Posterior cingulate gyrus (tissue), 11 donors: ENCODE measurements at regions of chr20 and their contacts with region 1.

Region 1: GRCh38 chr20:16729565-16730456 is at the start of gene SNRPB2:
- DNase-seq: peak; percentile 90 to 99 (median 94)

Region 2: GRCh38 chr20:16573001-16573965 is 156.5 kb before region 1 on chr20 and contains the start of gene KIF16B:
- intact Hi-C with region 1: loop called (anchors 2 kb)
- DNase-seq: peak; percentile 85 to 98 (median 90)

Region 3: DNA sequence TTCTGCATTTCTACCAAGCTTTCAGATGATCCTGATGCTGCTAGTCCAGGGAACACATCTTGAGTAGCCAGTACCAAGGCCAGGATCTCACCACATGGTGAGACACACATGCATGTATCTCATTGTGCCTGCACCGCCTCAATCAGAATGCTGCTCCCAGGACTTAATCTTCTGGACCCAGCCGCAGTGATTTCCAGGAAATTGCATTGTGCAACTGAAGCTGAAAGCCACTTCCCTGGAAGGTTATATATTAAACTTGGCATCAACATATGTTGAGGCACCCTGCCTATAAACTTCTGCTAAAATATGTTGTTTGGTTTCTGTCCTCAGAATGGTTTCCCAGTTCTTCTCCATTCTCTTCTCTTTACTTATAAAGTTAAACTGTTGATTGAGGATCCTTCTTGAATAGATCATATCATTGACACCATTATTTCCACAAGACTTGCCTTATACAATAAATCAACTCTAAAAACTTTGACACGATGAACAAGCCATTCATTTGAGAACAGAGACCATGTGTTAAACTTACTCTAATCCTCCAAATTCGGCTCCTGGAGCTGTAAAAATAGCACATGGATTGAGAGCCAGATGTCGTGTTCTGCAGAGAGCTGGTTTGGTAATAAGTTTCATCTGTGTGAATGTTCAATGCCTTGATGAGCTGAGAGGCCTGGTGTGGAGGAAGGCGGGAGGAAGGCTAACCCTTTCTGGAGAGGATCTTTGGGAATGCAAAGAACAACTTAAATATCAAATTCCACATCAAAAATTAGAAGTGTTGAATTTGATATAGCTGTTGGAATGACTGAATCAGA is 432.1 kb after region 1 on chr20:
- intact Hi-C with region 1: no loop called
- DNase-seq: peak in 1 of 10 donors; percentile 41